Breast epithelium (tissue), 4 donors: ENCODE measurements at regions of chr1 and their contacts with region 1.

Region 1: GRCh38 chr1:235835226-235835625 is 31.5 kb downstream of the LYST start:
- DNase-seq: no peak
- H3K4me3 ChIP-seq: peak overlapping the region in 1 of 3 donors; percentile 31
- H3K27ac ChIP-seq: peak overlapping the region in 1 of 2 donors; percentile 29
- H3K4me1 ChIP-seq: no peaks in the 10 kb centered on the region
- H3K27me3 ChIP-seq: no peaks in the 10 kb centered on the region
- CTCF ChIP-seq: no peak
- POLR2A ChIP-seq: no peak

Region 2: GRCh38 chr1:234452091-234452954 is 1382.9 kb before region 1 on chr1:
- intact Hi-C with region 1: loop called (anchors 5 kb)
- DNase-seq: no peak
- H3K4me3 ChIP-seq: no peak overlapping the region
- H3K27ac ChIP-seq: no peak overlapping the region
- H3K4me1 ChIP-seq: no peaks in the 10 kb centered on the region
- H3K27me3 ChIP-seq: no peaks in the 10 kb centered on the region
- CTCF ChIP-seq: no peak
- POLR2A ChIP-seq: no peak